ENCODE measurements at regions of chr5 and their contacts with region 1.

Region 1: DNA sequence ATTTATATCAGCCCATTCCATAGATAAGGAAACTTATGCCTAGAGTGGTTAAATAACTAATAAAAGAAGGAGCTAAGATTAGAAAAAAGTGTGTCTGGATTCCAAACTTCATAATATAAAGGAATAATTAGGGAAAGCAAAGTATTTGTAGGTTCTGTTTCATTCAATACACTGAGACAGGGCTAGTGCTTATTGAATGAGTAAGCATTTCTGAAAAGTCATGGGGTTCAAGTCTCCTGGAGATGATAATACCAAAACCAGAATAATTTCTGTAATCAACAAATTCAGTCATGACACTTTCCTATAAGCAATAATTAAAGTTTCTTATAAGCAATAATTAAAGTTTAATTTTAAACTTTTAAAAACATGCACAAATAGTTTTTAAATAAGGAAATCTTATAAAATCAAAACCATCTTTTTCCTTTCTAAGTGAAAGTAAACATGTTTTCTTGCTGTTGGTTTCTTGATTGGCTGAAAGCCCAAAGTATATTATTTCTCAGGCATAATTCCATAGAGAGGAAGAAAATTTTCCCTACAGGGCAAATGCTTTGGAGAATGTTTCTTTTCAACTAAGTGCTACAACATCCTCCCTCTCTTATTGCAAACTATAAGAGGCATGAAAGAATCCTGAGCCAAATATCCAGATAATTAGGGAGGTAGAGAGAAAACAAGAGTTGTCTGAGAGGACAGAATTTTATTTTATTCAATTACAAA is 510.2 kb downstream of the PRELID2 start:
- DNase-seq: no peak
- ATAC-seq: no peak
- H3K4me3 ChIP-seq: no peak overlapping the region
- H3K27ac ChIP-seq: no peak overlapping the region
- H3K4me1 ChIP-seq: no peaks in the 10 kb centered on the region
- H3K27me3 ChIP-seq: no peaks in the 10 kb centered on the region
- CTCF ChIP-seq: no peak

Region 2: GRCh38 chr5:144390133-144390532 is 934.8 kb before region 1 on chr5:
- CTCF ChIA-PET with region 1: no interaction called
- POLR2A ChIA-PET with region 1: no interaction called
- intact Hi-C with region 1: loop called (anchors 10 kb)
- DNase-seq: peak; percentile 14
- ATAC-seq: 0 out of 2 replicates have a peak, but pooled peaks have one; percentile 31
- H3K4me3 ChIP-seq: no peak overlapping the region
- H3K27ac ChIP-seq: no peak overlapping the region
- H3K4me1 ChIP-seq: no peaks in the 10 kb centered on the region
- H3K27me3 ChIP-seq: no peaks in the 10 kb centered on the region
- CTCF ChIP-seq: peak; percentile 48

Region 3: DNA sequence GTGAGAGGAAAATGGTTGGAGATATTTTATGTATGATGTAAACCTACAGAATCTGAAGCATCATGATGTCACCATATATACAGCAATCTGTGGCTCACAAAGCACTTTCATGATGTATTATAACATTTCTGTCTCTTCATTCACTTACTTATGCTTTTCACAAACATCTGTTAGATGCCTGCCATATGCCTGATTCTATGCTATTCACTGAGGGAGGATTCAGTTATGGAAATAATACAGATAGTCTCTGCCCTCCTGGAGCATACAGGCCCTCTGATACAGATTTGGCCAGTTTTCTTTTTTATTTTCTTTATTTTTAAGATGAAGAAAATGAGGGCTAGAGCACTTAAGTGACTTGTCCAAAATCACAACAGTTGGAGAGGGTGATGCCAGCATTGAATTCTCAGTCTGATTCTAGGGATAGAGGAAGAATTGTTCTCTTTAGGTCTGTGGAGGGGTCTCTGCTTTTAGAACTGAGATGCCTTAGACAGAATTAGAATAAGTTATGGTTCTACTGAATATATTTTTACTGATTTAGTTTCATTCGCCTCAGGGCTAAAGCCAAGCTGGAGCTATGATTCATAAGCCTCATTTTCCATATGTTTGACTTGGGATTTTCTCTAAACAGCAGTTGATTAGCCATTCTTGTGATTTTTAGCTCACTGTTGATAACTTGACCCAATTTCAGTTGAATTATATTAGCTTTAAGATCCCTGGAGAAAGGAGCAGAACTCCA is 126.2 kb before region 1 on chr5:
- CTCF ChIA-PET with region 1: no interaction called
- POLR2A ChIA-PET with region 1: no interaction called
- intact Hi-C with region 1: no loop called
- DNase-seq: no peak
- ATAC-seq: no peak
- H3K4me3 ChIP-seq: no peak overlapping the region
- H3K27ac ChIP-seq: no peak overlapping the region
- H3K4me1 ChIP-seq: no peaks in the 10 kb centered on the region
- H3K27me3 ChIP-seq: no peaks in the 10 kb centered on the region
- CTCF ChIP-seq: no peak

Region 4: GRCh38 chr5:145307866-145308382 is 17.0 kb before region 1 on chr5:
- CTCF ChIA-PET with region 1: no interaction called
- POLR2A ChIA-PET with region 1: no interaction called
- intact Hi-C with region 1: no loop called
- DNase-seq: no peak
- ATAC-seq: no peak
- H3K4me3 ChIP-seq: no peak overlapping the region
- H3K27ac ChIP-seq: no peak overlapping the region
- H3K4me1 ChIP-seq: no peaks in the 10 kb centered on the region
- H3K27me3 ChIP-seq: no peaks in the 10 kb centered on the region
- CTCF ChIP-seq: no peak

Region 5: GRCh38 chr5:145711417-145711816 is 386.5 kb after region 1 on chr5:
- CTCF ChIA-PET with region 1: no interaction called
- POLR2A ChIA-PET with region 1: no interaction called
- intact Hi-C with region 1: no loop called
- DNase-seq: no peak
- ATAC-seq: no peak
- H3K4me3 ChIP-seq: no peak overlapping the region
- H3K27ac ChIP-seq: no peak overlapping the region
- H3K4me1 ChIP-seq: no peaks in the 10 kb centered on the region
- H3K27me3 ChIP-seq: no peaks in the 10 kb centered on the region
- CTCF ChIP-seq: no peak

Measured in PC-3 (cell line).